Panc1 (cell line): ENCODE measurements at regions of chr10 and their contacts with region 1.

Region 1: DNA sequence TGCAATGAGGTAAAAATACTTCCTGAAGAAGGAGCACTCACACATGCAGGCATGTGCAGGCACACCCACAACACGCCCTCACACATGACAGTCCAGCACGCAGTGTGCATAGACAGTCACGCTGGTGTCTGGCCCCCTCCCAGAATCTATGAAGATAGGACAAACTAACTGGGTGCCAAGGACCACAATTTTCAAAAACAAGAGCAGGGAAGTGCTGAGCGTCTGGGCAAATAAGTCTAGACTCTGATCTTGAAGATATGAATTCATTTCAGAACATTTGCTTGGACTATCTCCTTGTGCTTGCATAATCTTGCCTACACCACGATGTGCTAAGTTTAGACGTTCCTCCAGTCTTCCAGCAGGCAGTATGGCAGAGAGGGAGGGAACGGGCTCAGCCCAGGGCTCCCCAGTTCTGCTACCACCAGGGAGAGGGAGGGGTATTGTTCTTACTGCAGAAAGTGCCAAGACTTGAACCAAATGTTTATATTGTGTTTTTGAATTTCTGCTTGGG is 276.5 kb upstream of the KLF6 start:
- DNase-seq: no peak
- ATAC-seq: peak; percentile 20; the same call in 1 of the 2 replicates
- H3K4me3 ChIP-seq: no peak overlapping the region
- H3K27ac ChIP-seq: peak overlapping the region; percentile 76
- H3K4me1 ChIP-seq: peaks cover 39% of the 10 kb centered on the region
- H3K27me3 ChIP-seq: no peaks in the 10 kb centered on the region
- CTCF ChIP-seq: no peak

Region 2: DNA sequence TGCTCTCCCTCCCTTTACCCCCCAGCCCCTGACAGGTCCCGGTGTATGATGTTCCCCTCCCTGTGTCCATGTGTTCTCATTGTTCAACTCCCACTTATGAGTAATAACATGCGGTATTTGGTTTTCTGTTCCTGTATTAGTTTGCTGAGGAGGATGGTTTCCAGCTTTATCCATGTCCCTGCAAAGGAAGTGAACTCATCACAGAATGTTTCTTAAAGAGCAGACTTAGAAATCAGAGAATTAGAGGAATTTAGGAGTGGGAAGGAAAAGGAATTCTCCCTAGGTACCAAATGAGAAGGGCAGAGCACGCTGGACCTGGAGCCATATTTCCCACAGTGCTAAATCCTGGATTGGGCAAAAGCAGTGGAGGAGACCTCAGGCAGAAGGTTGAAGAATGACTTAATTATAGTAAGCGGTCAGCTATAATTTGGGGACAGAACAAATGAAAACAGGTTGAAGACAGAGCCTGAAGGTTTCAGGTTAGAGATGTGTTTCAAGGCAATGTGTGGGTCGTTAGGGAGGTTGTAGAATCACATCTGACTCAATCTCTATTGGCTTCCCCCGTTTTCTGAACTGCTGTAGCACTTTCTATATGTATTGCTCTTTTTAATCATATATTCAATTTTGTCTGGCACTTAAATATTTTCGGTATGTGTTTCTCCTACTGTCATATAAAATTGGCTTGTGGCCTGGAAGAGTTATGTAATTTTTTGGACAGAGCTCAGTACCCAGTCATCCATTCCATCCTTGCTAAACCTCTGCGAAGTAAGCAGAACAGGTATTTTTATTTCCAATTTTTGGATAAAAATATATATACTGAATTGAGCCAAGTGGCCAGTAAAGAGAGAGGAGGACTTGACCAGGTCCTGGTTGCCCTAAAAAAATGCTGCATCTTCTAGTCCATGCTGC is 65.9 kb before region 1 on chr10:
- CTCF ChIA-PET with region 1: no interaction called
- POLR2A ChIA-PET with region 1: no interaction called
- in situ Hi-C with region 1: no loop called
- intact Hi-C with region 1: no loop called
- DNase-seq: no peak
- ATAC-seq: no peak
- H3K4me3 ChIP-seq: no peak overlapping the region
- H3K27ac ChIP-seq: peak overlapping the region; percentile 51; the same call in 1 of the 2 replicates
- H3K4me1 ChIP-seq: peaks cover 18% of the 10 kb centered on the region
- H3K27me3 ChIP-seq: no peaks in the 10 kb centered on the region
- CTCF ChIP-seq: no peak

Region 3: DNA sequence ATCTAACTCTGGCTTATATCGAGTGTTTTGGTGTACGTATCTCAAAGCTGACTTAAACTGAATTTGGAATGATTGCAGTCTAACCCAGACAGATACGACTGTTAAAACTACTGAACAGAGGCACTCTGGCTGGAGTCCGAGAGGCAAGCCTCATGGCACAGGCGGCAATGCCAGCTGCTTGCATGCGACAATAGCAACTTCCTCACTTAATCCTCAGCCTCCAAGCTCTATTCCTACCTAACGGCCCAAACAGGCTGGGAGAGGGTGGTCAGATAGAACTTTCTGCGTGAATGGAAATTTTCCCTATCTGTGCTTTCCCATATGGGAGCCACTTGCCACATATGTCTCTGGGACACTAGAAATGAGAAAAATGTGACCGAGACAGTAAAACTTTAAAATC is 15.5 kb after region 1 on chr10:
- CTCF ChIA-PET with region 1: no interaction called
- POLR2A ChIA-PET with region 1: interaction called, 12 read pairs
- in situ Hi-C with region 1: no loop called
- intact Hi-C with region 1: no loop called
- DNase-seq: no peak
- ATAC-seq: no peak
- H3K4me3 ChIP-seq: no peak overlapping the region
- H3K27ac ChIP-seq: peak overlapping the region; percentile 48; the same call in 1 of the 2 replicates
- H3K4me1 ChIP-seq: no peaks in the 10 kb centered on the region
- H3K27me3 ChIP-seq: no peaks in the 10 kb centered on the region
- CTCF ChIP-seq: no peak

Region 4: GRCh38 chr10:4176500-4177281 is 115.2 kb after region 1 on chr10:
- CTCF ChIA-PET with region 1: interaction called, 10 read pairs
- POLR2A ChIA-PET with region 1: no interaction called
- in situ Hi-C with region 1: no loop called
- intact Hi-C with region 1: no loop called
- DNase-seq: no peak
- ATAC-seq: no peak
- H3K4me3 ChIP-seq: no peak overlapping the region
- H3K27ac ChIP-seq: no peak overlapping the region
- H3K4me1 ChIP-seq: no peaks in the 10 kb centered on the region
- H3K27me3 ChIP-seq: no peaks in the 10 kb centered on the region
- CTCF ChIP-seq: no peak